ENCODE measurements at regions of chr12 and their contacts with region 1.

Region 1: DNA sequence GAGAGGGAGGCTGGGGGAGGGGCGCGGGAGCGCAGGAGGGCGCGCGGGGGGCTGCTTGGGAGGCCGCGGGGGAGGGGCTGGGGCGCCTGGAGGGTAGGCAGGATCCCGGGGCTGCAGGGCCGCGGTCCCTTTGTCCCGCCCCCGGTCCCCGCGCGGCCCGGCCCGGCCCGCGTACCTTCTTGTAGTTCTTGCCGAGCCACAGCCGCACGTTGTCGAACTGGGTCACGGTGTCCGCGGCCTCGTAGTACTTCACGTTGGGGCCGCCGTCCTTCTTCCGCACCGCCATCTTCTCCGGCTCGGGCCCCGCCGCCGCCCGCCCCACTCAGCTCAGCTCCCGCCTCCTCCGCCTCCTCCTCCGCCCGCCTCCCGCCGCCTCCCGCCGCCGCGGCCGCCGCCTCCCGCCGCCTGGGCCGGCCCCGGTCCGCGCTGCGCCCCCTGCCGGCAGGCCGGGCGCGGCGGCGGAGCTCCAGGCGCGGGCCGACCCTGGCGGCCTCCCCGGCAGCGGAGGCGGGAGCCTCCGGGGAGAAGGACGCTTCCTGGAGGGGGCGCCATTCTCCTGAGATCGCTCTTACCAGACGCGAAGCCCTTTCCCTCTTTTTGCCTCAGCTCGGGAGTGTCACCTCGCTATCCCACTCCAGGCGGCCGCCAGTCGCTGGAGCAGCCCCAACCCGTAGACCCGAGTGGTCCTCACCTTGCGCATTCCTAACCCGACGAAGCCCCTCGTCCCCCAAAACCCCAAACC is at the start of gene SMARCC2:
- DNase-seq: peak; percentile 92
- ATAC-seq: peak; percentile 81
- H3K4me3 Mint-ChIP-seq: peak within 1 kb of the TSS; percentile 99
- H3K27ac Mint-ChIP-seq: peak within 1 kb of the TSS; percentile 96
- H3K4me1 Mint-ChIP-seq: peaks cover 30% of the 10 kb centered on the region
- H3K27me3 Mint-ChIP-seq: peaks cover 3% of the 10 kb centered on the region; the same call in 1 of the 2 replicates
- CTCF ChIP-seq: no peak; the same call in 1 of the 2 replicates
- total RNA-seq, gene SMARCC2: 72.8 to 77.9 TPM (median 76.8 TPM) in 3 replicates

Region 2: GRCh38 chr12:56104109-56104814 is 85.1 kb before region 1 on chr12 and contains the start of gene PA2G4:
- CTCF ChIA-PET with region 1: interaction called, 18 read pairs
- POLR2A ChIA-PET with region 1: no interaction called
- DNase-seq: peak; percentile 98
- ATAC-seq: peak; percentile 98
- H3K4me3 Mint-ChIP-seq: peak within 1 kb of the TSS; percentile 90
- H3K27ac Mint-ChIP-seq: peak within 1 kb of the TSS; percentile 99
- H3K4me1 Mint-ChIP-seq: peaks cover 24% of the 10 kb centered on the region
- H3K27me3 Mint-ChIP-seq: no peaks in the 10 kb centered on the region
- CTCF ChIP-seq: no peak
- total RNA-seq, gene PA2G4: 198 to 249 TPM (median 199 TPM) in 3 replicates

Region 3: DNA sequence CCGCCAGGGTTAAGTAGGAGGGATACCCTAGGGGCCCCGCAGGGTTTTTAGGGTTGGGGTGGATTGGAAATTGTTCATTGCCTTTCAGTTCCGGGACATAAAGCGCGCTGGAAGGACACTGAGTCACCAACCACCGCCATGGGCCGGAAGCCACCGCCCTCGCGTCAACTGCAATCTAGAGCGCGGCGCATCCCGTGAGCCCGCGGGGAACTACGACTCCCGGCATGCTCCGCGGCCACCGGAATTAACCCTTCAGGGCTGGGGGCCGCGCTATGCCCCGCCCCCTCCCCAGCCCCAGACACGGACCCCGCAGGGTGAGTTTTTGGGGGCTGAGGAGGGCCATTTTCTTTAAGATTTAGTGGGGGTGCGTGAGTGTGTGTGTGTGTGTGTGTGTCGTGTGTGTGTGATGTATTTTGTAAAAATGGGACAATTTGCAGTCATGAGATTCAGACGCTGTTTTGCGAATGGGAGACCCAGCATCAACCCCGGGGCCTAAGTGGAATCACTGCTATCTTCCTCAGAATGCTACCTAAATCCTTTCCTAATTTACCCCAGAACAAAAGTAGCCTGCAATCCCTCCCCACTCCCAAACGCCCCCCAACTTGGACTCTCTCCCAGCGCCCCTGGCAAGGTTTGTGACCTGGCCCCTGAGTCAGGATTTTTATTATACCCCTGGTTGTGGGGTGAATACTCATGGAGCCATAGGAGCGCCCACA is 36.9 kb before region 1 on chr12 and contains the start of gene MYL6B:
- CTCF ChIA-PET with region 1: interaction called, 25 read pairs
- POLR2A ChIA-PET with region 1: interaction called, 9 read pairs
- DNase-seq: peak; percentile 91
- ATAC-seq: peak; percentile 79
- H3K4me3 Mint-ChIP-seq: peak within 1 kb of the TSS; percentile 93
- H3K27ac Mint-ChIP-seq: peak within 1 kb of the TSS; percentile 88
- H3K4me1 Mint-ChIP-seq: peaks cover 18% of the 10 kb centered on the region
- H3K27me3 Mint-ChIP-seq: no peaks in the 10 kb centered on the region
- CTCF ChIP-seq: no peak
- total RNA-seq, gene MYL6B: 171 to 180 TPM (median 173 TPM) in 3 replicates

Region 4: GRCh38 chr12:56206457-56207166 is 17.3 kb after region 1 on chr12:
- CTCF ChIA-PET with region 1: interaction called, 46 read pairs
- POLR2A ChIA-PET with region 1: interaction called, 3 read pairs
- DNase-seq: peak; percentile 83
- ATAC-seq: peak; percentile 96
- H3K4me3 Mint-ChIP-seq: no peak overlapping the region
- H3K27ac Mint-ChIP-seq: peak overlapping the region; percentile 90
- H3K4me1 Mint-ChIP-seq: no peaks in the 10 kb centered on the region
- H3K27me3 Mint-ChIP-seq: no peaks in the 10 kb centered on the region
- CTCF ChIP-seq: no peak; the same call in 1 of the 2 replicates

Region 5: GRCh38 chr12:56266693-56267442 is 77.5 kb after region 1 on chr12 and contains the start of gene COQ10A:
- CTCF ChIA-PET with region 1: interaction called, 37 read pairs
- POLR2A ChIA-PET with region 1: interaction called, 3 read pairs
- DNase-seq: peak; percentile 92
- ATAC-seq: peak; percentile 87
- H3K4me3 Mint-ChIP-seq: peak within 1 kb of the TSS; percentile 84
- H3K27ac Mint-ChIP-seq: peak within 1 kb of the TSS; percentile 97
- H3K4me1 Mint-ChIP-seq: peaks cover 14% of the 10 kb centered on the region
- H3K27me3 Mint-ChIP-seq: no peaks in the 10 kb centered on the region
- CTCF ChIP-seq: no peak
- total RNA-seq, gene COQ10A: 22.7 to 26.2 TPM (median 24.4 TPM) in 3 replicates

Measured in WTC11 (cell line).